MCF 10A (cell line): ENCODE measurements at regions of chr7 and their contacts with region 1.

Region 1: DNA sequence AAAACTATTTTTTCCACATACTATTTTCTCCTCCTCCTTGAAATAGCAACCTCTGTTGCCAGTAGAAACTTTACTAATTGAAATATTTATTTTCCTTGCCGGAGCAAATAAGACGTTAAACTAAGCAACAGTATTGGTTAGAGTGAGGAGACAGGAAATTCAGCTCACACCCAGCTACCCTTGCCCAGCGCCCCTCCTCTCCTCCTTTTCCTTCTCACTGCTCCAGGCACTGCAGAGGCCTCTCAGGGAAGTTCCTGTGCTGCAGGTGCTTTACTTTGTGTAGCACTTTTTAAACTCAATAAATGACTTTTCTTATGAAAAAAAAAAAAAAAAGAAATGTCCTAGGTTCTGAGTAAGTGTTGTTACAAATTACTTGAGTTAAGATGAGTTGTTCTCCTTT is 134.0 kb downstream of the SEMA3E start:
- DNase-seq: no peak
- H3K4me3 Mint-ChIP-seq: no peak overlapping the region
- H3K27ac Mint-ChIP-seq: no peak overlapping the region
- H3K4me1 Mint-ChIP-seq: peaks cover 5% of the 10 kb centered on the region
- H3K27me3 Mint-ChIP-seq: no peaks in the 10 kb centered on the region
- CTCF ChIP-seq: no peak

Region 2: GRCh38 chr7:83410989-83411591 is 103.9 kb before region 1 on chr7:
- CTCF ChIA-PET with region 1: no interaction called
- POLR2A ChIA-PET with region 1: no interaction called
- intact Hi-C with region 1: loop called (anchors 2 kb)
- DNase-seq: peak; percentile 48
- H3K4me3 Mint-ChIP-seq: no peak overlapping the region
- H3K27ac Mint-ChIP-seq: no peak overlapping the region
- H3K4me1 Mint-ChIP-seq: peaks cover 4% of the 10 kb centered on the region
- H3K27me3 Mint-ChIP-seq: peaks cover 53% of the 10 kb centered on the region
- CTCF ChIP-seq: peak; percentile 78